Heart right ventricle (tissue), 16 donors: ENCODE measurements at regions of chr18 and their contacts with region 1.

Region 1: GRCh38 chr18:62814132-62814759 is 98.9 kb downstream of the PHLPP1 start:
- DNase-seq: no peak
- ATAC-seq: peak in 1 of 8 donors; percentile 41
- H3K4me3 ChIP-seq: no peak overlapping the region
- H3K27ac ChIP-seq: no peak overlapping the region
- H3K4me1 ChIP-seq: peaks cover 0 to 32% (median 17%) of the 10 kb centered on the region in 9 donors
- H3K27me3 ChIP-seq: no peaks in the 10 kb centered on the region
- CTCF ChIP-seq: no peak

Region 2: DNA sequence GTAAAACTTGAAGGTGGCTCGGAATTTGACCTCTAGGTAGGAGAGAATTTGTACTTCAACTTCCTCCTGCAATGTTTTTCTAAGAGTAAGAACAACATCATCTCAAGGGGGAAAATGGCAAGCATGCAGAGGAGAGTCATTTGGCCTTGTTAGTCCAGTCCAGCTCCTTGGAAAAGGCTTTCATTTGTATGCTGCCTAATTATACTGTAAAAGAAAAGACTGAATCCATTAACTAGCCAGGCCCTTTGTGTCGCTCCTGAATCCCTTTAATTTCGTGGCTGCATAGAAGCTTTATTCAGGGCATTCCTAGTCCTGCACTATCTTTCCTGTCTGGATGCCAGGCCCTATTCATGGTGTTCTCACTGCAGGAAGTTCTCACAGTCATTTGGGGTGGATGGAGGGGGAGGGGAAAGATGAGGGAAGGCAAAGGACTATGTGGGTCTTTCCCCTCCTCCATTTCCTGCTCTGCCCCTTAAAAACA is 62.9 kb before region 1 on chr18:
- intact Hi-C with region 1: no loop called
- DNase-seq: peak in 1 of 2 donors; percentile 67
- ATAC-seq: peak; percentile 71 to 91 (median 81)
- H3K4me3 ChIP-seq: no peak overlapping the region
- H3K27ac ChIP-seq: peak overlapping the region in 6 of 10 donors; percentile 13 to 51 (median 34)
- H3K4me1 ChIP-seq: peaks cover 3 to 37% (median 25%) of the 10 kb centered on the region in 9 donors
- H3K27me3 ChIP-seq: no peaks in the 10 kb centered on the region
- CTCF ChIP-seq: no peak

Region 3: DNA sequence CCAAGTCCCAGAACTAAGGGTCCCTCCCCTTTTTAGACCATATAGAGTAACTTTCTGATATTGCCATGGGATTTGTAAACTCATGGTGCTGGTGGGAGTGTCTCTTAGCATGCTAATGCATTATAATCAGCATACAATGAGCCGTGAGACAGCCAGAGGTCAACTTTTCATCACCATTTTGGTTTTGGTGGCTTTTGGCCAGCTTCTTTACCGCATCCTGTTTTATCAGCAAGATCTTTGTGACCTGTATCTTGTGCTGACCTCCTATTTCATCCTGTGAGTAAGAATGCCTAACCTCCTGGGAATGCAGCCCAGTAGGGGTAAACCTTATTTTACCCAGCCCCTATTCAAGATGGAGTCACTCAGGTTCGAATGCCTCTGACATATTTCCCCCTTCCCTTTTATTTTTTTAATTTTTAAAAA is 49.3 kb after region 1 on chr18:
- intact Hi-C with region 1: no loop called
- DNase-seq: peak in 1 of 2 donors; percentile 25
- ATAC-seq: peak in 2 of 8 donors; percentile 28 to 60
- H3K4me3 ChIP-seq: no peak overlapping the region
- H3K27ac ChIP-seq: no peak overlapping the region
- H3K4me1 ChIP-seq: peaks cover 0 to 42% (median 12%) of the 10 kb centered on the region in 9 donors
- H3K27me3 ChIP-seq: no peaks in the 10 kb centered on the region
- CTCF ChIP-seq: no peak

Region 4: GRCh38 chr18:62938487-62938886 is 124.2 kb after region 1 on chr18:
- intact Hi-C with region 1: loop called in 1 of 10 experiments (anchors 10 kb)
- DNase-seq: no peak
- ATAC-seq: no peak
- H3K4me3 ChIP-seq: no peak overlapping the region
- H3K27ac ChIP-seq: peak overlapping the region in 8 of 10 donors; percentile 13 to 81 (median 62)
- H3K4me1 ChIP-seq: peaks cover 0 to 40% (median 21%) of the 10 kb centered on the region in 9 donors
- H3K27me3 ChIP-seq: no peaks in the 10 kb centered on the region
- CTCF ChIP-seq: no peak